ENCODE measurements at regions of chr1 and their contacts with region 1.

Region 1: DNA sequence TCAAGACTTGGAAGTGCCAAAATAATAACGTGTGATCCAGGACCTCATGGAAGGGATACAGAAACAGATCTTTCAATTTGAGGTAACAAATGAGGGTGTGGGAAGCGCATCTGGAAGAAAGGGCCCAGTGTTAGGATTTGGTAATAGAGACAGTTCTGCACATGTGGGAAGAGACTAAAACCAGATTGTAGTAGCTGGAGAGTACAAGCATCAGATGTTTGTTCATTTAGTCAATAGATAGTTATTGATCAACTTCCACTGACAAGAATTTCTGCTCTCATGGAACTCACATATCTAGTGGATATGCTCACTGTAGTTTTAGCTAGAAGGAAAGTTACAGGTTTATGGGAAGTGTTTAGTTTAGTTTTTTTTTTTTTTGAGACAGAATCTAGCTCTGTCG is 153.6 kb downstream of the TLR5 start:
- DNase-seq: no peak

Region 2: GRCh38 chr1:222950892-222951291 is 38.6 kb before region 1 on chr1:
- intact Hi-C with region 1: loop called in 1 of 2 experiments (anchors 1 kb)
- DNase-seq: no peak